Activated CD4-positive, alpha-beta T cell treated with anti-CD3 and anti-CD28 coated beads, Interleukin-2, amount 10 ng/mL, durations not matched to agents 24 days and 14 days (primary cell): ENCODE measurements at regions of chr19 and their contacts with region 1.

Region 1: GRCh38 chr19:36915992-36916830 is at the starts of genes ZNF568 and ZNF829:
- DNase-seq: peak; percentile 97
- H3K4me3 Mint-ChIP-seq: peak within 1 kb of the TSS; percentile 90
- H3K27ac Mint-ChIP-seq: peak within 1 kb of the TSS; percentile 96
- H3K4me1 Mint-ChIP-seq: peaks cover 19% of the 10 kb centered on the region
- H3K27me3 Mint-ChIP-seq: no peaks in the 10 kb centered on the region
- total RNA-seq, gene ZNF568: 4.4 and 6.1 TPM in 2 replicates
- total RNA-seq, gene ZNF829: 4.8 TPM in 2 replicates

Region 2: GRCh38 chr19:36605101-36605876 is 310.9 kb before region 1 on chr19 and contains the start of gene ZNF382:
- intact Hi-C with region 1: loop called (anchors 1 kb)
- DNase-seq: peak; percentile 96
- H3K4me3 Mint-ChIP-seq: peak within 1 kb of the TSS; percentile 89
- H3K27ac Mint-ChIP-seq: peak within 1 kb of the TSS; percentile 98
- H3K4me1 Mint-ChIP-seq: peaks cover 22% of the 10 kb centered on the region
- H3K27me3 Mint-ChIP-seq: no peaks in the 10 kb centered on the region
- total RNA-seq, gene ZNF382: 9.5 and 13.2 TPM in 2 replicates

Region 3: DNA sequence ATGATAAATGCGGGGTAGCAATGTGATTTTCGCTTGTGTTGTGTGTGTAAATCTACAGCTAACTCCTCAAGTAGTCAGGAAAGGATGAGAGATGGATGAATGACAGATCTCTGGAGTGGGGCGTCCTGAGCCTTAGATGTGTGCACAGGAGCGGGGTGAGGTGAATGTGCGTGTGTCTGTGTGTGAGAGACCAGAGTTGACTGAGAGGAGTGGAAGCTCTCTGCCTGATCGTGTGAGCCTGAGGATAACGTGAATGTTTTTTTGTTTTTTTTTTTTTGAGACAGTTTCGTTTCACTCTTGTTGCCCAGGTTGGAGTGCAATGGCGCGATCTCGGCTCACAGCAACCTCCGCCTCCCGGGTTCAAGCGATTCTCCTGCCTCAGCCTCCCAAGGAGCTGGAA is 250.4 kb before region 1 on chr19:
- intact Hi-C with region 1: loop called (anchors 1 kb)
- DNase-seq: no peak
- H3K4me3 Mint-ChIP-seq: peak overlapping the region; percentile 98
- H3K27ac Mint-ChIP-seq: peak overlapping the region; percentile 76
- H3K4me1 Mint-ChIP-seq: peaks cover 23% of the 10 kb centered on the region
- H3K27me3 Mint-ChIP-seq: no peaks in the 10 kb centered on the region

Region 4: GRCh38 chr19:36837906-36838783 is 78.1 kb before region 1 on chr19 and contains the start of gene ZNF790:
- intact Hi-C with region 1: loop called (anchors 1 kb)
- DNase-seq: peak; percentile 94
- H3K4me3 Mint-ChIP-seq: no peak within 1 kb of the TSS
- H3K27ac Mint-ChIP-seq: peak within 1 kb of the TSS; percentile 49
- H3K4me1 Mint-ChIP-seq: peaks cover 4% of the 10 kb centered on the region
- H3K27me3 Mint-ChIP-seq: no peaks in the 10 kb centered on the region
- total RNA-seq, gene ZNF790: 5.1 and 6.7 TPM in 2 replicates

Region 5: DNA sequence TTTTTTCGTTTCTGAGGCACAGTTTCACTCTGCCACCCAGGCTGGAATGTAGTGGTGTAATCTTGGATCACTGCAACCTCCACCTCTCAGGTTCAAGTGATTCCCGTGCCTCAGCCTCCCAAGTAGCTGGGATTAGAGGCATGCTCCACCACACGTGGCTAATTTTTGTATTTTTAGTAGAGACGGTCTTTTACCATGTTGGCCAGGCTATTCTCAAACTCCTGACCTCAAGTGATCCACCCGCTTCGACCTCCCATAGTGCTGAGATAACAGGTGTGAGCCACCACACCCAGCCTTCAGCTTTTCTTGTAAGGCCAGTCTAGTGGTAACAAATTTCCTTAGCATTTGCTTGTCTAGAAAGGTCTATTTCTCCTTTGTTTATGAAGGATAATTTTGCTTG is 46.1 kb after region 1 on chr19:
- intact Hi-C with region 1: no loop called
- DNase-seq: no peak
- H3K4me3 Mint-ChIP-seq: no peak overlapping the region
- H3K27ac Mint-ChIP-seq: no peak overlapping the region
- H3K4me1 Mint-ChIP-seq: no peaks in the 10 kb centered on the region
- H3K27me3 Mint-ChIP-seq: no peaks in the 10 kb centered on the region

Region 6: GRCh38 chr19:36973021-36973843 is 57.0 kb after region 1 on chr19:
- intact Hi-C with region 1: loop called (anchors 2 kb)
- DNase-seq: peak; percentile 92
- H3K4me3 Mint-ChIP-seq: peak overlapping the region; percentile 99
- H3K27ac Mint-ChIP-seq: peak overlapping the region; percentile 92
- H3K4me1 Mint-ChIP-seq: peaks cover 12% of the 10 kb centered on the region
- H3K27me3 Mint-ChIP-seq: no peaks in the 10 kb centered on the region

Region 7: GRCh38 chr19:37172368-37173366 is 256.5 kb after region 1 on chr19 and contains the start of gene ZNF585A:
- intact Hi-C with region 1: loop called (anchors 1 kb)
- DNase-seq: peak; percentile 94
- H3K4me3 Mint-ChIP-seq: no peak within 1 kb of the TSS
- H3K27ac Mint-ChIP-seq: no peak within 1 kb of the TSS
- H3K4me1 Mint-ChIP-seq: no peaks in the 10 kb centered on the region
- H3K27me3 Mint-ChIP-seq: no peaks in the 10 kb centered on the region
- total RNA-seq, gene ZNF585A: 2.7 and 3.9 TPM in 2 replicates